ENCODE measurements at regions of chr18 and their contacts with region 1.

Region 1: DNA sequence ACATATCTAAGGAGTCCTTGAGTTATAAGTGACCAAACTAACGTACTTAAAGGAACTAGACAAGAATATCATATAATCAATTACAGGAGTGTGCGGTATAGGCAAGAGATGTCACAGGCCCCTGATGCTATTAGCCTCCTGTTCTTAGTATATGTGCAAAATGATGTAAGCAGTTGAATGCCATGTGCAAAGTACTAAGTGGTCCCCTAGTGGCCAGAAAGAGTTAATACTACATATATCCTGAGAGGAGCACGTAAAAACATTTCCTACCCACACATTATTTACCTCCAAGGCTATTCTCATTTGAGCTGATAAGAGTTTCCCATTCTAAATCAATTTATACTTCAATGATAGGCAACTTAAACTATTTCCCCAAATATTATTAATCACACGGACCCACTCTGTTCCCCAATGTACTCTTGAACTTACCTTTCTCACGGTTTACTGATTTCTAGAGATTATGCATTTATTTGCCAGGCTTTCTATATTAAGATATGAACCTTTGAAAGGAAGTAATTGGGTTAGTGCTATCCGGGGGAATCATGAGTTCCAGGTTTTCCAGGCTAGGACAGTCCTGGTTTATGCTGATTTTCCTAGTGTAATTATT is 158.0 kb upstream of the KLHL14 start:
- DNase-seq: peak; percentile 2
- ATAC-seq: peak; percentile 63
- H3K4me3 ChIP-seq: no peak overlapping the region
- H3K27ac ChIP-seq: no peak overlapping the region
- H3K4me1 ChIP-seq: no peaks in the 10 kb centered on the region
- H3K27me3 ChIP-seq: no peaks in the 10 kb centered on the region
- CTCF ChIP-seq: peak in 2 of 3 experiments; percentile 49 to 56; a peak in 4 of 6 replicates
- POLR2A ChIP-seq: no peak
- RAD21 ChIP-seq: peak; percentile 13; the same call in 1 of the 2 replicates

Region 2: GRCh38 chr18:32158108-32158624 is 772.6 kb before region 1 on chr18:
- CTCF ChIA-PET with region 1: no interaction called
- POLR2A ChIA-PET with region 1: no interaction called
- RAD21 ChIA-PET with region 1: no interaction called
- intact Hi-C with region 1: loop called (anchors 10 kb)
- DNase-seq: peak; percentile 85
- ATAC-seq: peak; percentile 98
- H3K4me3 ChIP-seq: 0 out of 4 replicates have a peak overlapping the region, but pooled peaks of 1 of the 2 experiments have one; percentile 20
- H3K27ac ChIP-seq: no peak overlapping the region
- H3K4me1 ChIP-seq: peaks cover 4 to 16% of the 10 kb centered on the region in 2 experiments; a peak in 3 of 4 replicates
- H3K27me3 ChIP-seq: no peaks in the 10 kb centered on the region
- CTCF ChIP-seq: peak; percentile 75 to 86 (median 76)
- POLR2A ChIP-seq: no peak
- RAD21 ChIP-seq: peak; percentile 94

Region 3: GRCh38 chr18:33146014-33146413 is 215.2 kb after region 1 on chr18:
- CTCF ChIA-PET with region 1: no interaction called
- POLR2A ChIA-PET with region 1: no interaction called
- RAD21 ChIA-PET with region 1: no interaction called
- intact Hi-C with region 1: no loop called
- DNase-seq: no peak
- ATAC-seq: no peak
- H3K4me3 ChIP-seq: no peak overlapping the region
- H3K27ac ChIP-seq: no peak overlapping the region
- H3K4me1 ChIP-seq: no peaks in the 10 kb centered on the region
- H3K27me3 ChIP-seq: no peaks in the 10 kb centered on the region
- CTCF ChIP-seq: no peak
- POLR2A ChIP-seq: no peak
- RAD21 ChIP-seq: no peak

Measured in HCT116 (cell line).